Caco-2 (cell line): ENCODE measurements at regions of chr16 and their contacts with region 1.

Region 1: DNA sequence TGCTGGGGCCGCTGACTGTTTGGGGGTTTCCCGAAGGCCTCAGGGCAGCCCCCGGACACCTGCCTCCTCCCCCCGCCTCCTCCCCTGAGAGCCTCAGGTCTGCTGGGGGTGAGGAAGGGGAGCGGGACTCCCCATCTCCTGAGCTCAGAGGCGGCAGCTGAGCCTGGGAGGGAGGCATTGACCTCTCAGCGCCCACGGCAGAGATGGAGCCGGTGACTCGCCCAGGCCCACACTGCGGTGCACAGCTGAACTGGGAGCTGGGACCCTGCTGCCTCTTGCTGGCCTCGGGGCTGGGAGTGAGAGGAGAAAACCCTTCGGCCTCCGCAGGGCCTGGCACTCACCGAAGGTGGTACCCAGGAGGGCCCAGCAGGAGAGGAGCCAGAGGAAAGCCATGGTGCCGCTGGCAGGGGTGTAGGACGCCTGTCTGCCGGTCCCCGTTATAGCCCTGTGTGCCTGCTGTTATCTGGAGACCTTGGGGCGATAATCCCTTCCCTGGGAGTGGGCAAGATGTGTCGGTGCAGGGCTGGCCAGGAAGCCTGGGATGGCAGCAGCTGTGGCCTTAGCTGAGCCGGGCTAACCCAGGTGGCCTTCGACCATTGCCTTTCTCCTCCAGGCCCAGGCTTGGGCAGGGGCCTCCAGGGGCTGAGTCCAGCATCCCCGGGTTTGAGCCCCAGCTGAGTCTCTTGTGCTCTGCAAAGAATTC is at the start of gene CTRB2:
- DNase-seq: no peak
- H3K4me3 ChIP-seq: no peak within 1 kb of the TSS
- H3K4me3 Mint-ChIP-seq: no peak within 1 kb of the TSS
- H3K27ac Mint-ChIP-seq: no peak within 1 kb of the TSS
- H3K4me1 ChIP-seq: no peaks in the 10 kb centered on the region
- H3K4me1 Mint-ChIP-seq: no peaks in the 10 kb centered on the region
- H3K27me3 ChIP-seq: no peaks in the 10 kb centered on the region
- H3K27me3 Mint-ChIP-seq: no peaks in the 10 kb centered on the region
- CTCF ChIP-seq: no peak
- total RNA-seq, gene CTRB2: not detected in 2 replicates

Region 2: GRCh38 chr16:75224306-75225091 is 17.6 kb after region 1 on chr16:
- CTCF ChIA-PET with region 1: interaction called, 4 read pairs
- POLR2A ChIA-PET with region 1: no interaction called
- intact Hi-C with region 1: loop called (anchors 2 kb)
- DNase-seq: no peak
- H3K4me3 ChIP-seq: no peak overlapping the region
- H3K4me3 Mint-ChIP-seq: no peak overlapping the region
- H3K27ac Mint-ChIP-seq: no peak overlapping the region
- H3K4me1 ChIP-seq: 0 out of 2 replicates have a peak, but pooled peaks cover 4% of the 10 kb centered on the region
- H3K4me1 Mint-ChIP-seq: peaks cover 6% of the 10 kb centered on the region
- H3K27me3 ChIP-seq: no peaks in the 10 kb centered on the region
- H3K27me3 Mint-ChIP-seq: peaks cover 2% of the 10 kb centered on the region
- CTCF ChIP-seq: no peak